ENCODE measurements at regions of chr6 and their contacts with region 1.

Region 1: GRCh38 chr6:43318011-43318410 is 9.4 kb upstream of the CRIP3 start:
- DNase-seq: no peak
- ATAC-seq: no peak
- H3K4me3 ChIP-seq: no peak overlapping the region
- H3K27ac ChIP-seq: no peak overlapping the region
- H3K4me1 ChIP-seq: no peaks in the 10 kb centered on the region
- H3K27me3 ChIP-seq: no peaks in the 10 kb centered on the region
- CTCF ChIP-seq: no peak

Region 2: DNA sequence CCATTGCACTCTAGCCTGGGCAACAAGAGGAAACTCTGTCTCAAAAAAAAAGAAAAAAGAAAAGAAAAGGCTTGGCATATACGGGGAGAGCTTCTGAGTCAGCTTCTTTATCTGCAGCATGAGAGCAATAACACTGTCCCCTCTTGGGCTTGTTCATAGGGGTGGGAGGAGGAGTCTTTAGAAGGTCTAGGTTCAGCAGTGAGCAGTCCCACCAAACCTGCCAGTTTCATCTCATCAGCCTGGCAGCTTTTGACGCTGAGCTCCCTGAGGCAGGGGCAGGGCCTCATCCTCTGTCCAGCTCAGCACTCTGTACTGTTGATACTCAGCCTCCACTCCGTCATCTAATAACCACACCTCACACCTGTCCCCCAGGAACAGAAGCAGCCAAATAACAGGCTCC is 1170.0 kb before region 1 on chr6:
- CTCF ChIA-PET with region 1: no interaction called
- POLR2A ChIA-PET with region 1: no interaction called
- intact Hi-C with region 1: no loop called
- DNase-seq: peak; percentile 27
- ATAC-seq: no peak
- H3K4me3 ChIP-seq: no peak overlapping the region
- H3K27ac ChIP-seq: no peak overlapping the region
- H3K4me1 ChIP-seq: peaks cover 15% of the 10 kb centered on the region
- H3K27me3 ChIP-seq: no peaks in the 10 kb centered on the region
- CTCF ChIP-seq: no peak

Region 3: DNA sequence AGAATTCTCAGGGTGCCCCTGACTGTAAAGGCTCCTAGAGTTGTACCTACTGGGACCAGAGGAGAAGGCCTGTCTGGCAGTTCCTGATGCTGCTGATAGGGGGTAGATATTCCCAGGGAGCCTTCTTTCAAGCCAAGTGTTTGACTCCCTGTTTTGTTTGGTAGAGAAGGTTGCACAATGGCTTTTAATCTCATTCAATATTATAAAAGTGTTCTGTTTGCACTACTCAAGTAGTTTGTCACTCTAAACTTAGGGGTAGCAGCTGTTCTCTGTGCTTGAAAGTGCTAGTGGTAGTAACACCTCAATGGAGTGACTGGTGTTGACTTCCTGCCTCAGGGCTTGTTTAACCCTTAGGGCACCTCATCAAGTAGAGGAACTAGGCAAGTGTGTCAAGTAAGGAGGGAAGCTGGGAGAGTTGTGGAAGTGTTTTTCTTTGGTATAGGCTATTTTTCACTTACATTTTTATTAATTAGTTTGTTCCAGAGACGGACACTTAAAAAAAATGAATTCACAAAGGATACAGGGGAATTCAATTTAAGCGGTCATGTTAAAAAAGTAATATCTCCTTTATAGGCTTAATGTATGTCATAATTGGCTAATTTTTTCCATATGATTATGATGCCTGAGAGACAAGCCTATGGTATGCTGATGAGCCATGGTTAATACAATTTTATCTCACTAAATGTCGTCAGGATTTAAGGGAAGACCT is 498.1 kb before region 1 on chr6:
- CTCF ChIA-PET with region 1: no interaction called
- POLR2A ChIA-PET with region 1: no interaction called
- intact Hi-C with region 1: no loop called
- DNase-seq: no peak
- ATAC-seq: no peak
- H3K4me3 ChIP-seq: no peak overlapping the region
- H3K27ac ChIP-seq: no peak overlapping the region
- H3K4me1 ChIP-seq: no peaks in the 10 kb centered on the region
- H3K27me3 ChIP-seq: no peaks in the 10 kb centered on the region
- CTCF ChIP-seq: no peak

Region 4: GRCh38 chr6:43239054-43239453 is 79.0 kb before region 1 on chr6:
- CTCF ChIA-PET with region 1: no interaction called
- POLR2A ChIA-PET with region 1: interaction called, 21 read pairs
- intact Hi-C with region 1: no loop called
- DNase-seq: no peak
- ATAC-seq: no peak
- H3K4me3 ChIP-seq: no peak overlapping the region
- H3K27ac ChIP-seq: no peak overlapping the region
- H3K4me1 ChIP-seq: no peaks in the 10 kb centered on the region
- H3K27me3 ChIP-seq: peaks cover 48% of the 10 kb centered on the region
- CTCF ChIP-seq: no peak

Region 5: GRCh38 chr6:43334466-43335095 is 16.6 kb after region 1 on chr6:
- CTCF ChIA-PET with region 1: no interaction called
- POLR2A ChIA-PET with region 1: interaction called, 11 read pairs
- intact Hi-C with region 1: no loop called
- DNase-seq: peak; percentile 82
- ATAC-seq: peak; percentile 82
- H3K4me3 ChIP-seq: no peak overlapping the region
- H3K27ac ChIP-seq: no peak overlapping the region
- H3K4me1 ChIP-seq: no peaks in the 10 kb centered on the region
- H3K27me3 ChIP-seq: no peaks in the 10 kb centered on the region
- CTCF ChIP-seq: peak; percentile 79

Measured in PC-3 (cell line).